Panc1 (cell line): ENCODE measurements at regions of chr5 and their contacts with region 1.

Region 1: GRCh38 chr5:172336264-172336663 is 52.7 kb upstream of the UBTD2 start:
- DNase-seq: no peak
- ATAC-seq: no peak
- H3K4me3 ChIP-seq: no peak overlapping the region
- H3K27ac ChIP-seq: no peak overlapping the region; the same call in 1 of the 2 replicates
- H3K4me1 ChIP-seq: no peaks in the 10 kb centered on the region; the same call in 1 of the 2 replicates
- H3K27me3 ChIP-seq: no peaks in the 10 kb centered on the region
- CTCF ChIP-seq: no peak

Region 2: DNA sequence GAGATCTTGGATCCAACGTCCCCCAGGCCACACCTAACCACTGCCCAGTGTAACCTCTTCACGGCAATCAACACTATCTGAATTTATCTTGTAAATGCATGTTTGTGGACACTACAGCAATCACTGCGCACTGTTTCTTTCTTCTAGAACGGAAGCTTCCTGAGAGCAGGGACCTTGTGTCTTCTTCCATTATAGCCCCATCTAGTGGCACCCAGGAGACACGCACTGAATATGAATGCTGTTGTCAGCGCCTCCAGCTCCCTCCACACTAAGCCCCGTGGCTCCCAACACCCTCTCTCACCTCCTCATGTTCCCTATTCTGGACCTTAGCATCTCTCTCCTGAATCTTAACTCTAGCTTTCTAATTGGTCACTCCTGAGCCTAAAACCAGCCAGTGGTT is 478.0 kb before region 1 on chr5:
- CTCF ChIA-PET with region 1: no interaction called
- POLR2A ChIA-PET with region 1: no interaction called
- in situ Hi-C with region 1: no loop called
- intact Hi-C with region 1: no loop called
- DNase-seq: no peak
- ATAC-seq: peak; percentile 69
- H3K4me3 ChIP-seq: no peak overlapping the region
- H3K27ac ChIP-seq: no peak overlapping the region
- H3K4me1 ChIP-seq: no peaks in the 10 kb centered on the region
- H3K27me3 ChIP-seq: no peaks in the 10 kb centered on the region
- CTCF ChIP-seq: peak; percentile 81

Region 3: DNA sequence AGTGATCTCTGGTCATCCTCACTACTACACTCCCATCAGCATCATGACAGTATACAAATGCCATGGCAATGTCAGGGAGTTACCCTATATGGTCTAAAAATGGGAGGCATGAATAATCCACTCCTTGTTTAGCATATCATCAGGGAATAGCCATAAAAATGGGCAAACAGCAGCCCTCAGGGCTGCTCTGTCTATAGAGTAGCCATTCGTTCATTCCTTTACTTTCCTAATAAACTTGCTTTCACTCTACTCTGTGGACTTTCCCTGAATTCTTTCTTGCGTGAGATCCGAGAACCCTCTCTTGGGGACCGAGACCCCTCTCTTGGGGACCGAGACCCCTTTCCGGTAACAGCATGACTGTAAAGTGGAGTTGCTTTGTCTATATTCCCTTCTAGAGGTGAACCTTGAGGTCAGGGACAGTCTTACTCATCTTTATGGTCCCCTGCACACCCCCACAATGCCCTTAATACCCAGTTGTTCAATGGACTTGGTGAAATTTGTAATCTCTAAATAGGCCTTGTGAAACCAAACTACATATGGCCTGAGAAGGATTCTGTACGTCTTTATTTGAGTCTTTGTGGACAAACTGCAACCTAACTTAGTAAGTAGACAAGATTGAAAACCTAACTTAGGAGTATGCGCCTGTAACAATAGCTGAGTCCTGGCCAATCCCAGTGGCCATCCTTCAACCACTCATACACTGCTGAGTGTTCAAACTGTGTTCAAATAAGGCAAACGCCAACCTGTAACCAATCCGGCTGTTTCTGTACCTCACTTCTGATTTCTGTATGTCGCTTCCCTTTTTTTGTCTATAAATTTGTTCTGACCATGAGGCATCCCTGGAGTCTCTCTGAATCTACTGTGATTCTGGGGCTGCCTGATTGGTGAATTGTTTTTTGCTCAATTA is 20.4 kb before region 1 on chr5:
- CTCF ChIA-PET with region 1: no interaction called
- POLR2A ChIA-PET with region 1: interaction called, 12 read pairs
- in situ Hi-C with region 1: no loop called
- intact Hi-C with region 1: no loop called
- DNase-seq: no peak
- ATAC-seq: peak; percentile 73
- H3K4me3 ChIP-seq: no peak overlapping the region
- H3K27ac ChIP-seq: peak overlapping the region; percentile 77
- H3K4me1 ChIP-seq: peaks cover 23% of the 10 kb centered on the region
- H3K27me3 ChIP-seq: no peaks in the 10 kb centered on the region
- CTCF ChIP-seq: no peak